ENCODE measurements at regions of chr19 and their contacts with region 1.

Region 1: GRCh38 chr19:12757544-12758274 is 6.1 kb downstream of the BEST2 start:
- DNase-seq: peak; percentile 77
- ATAC-seq: peak; percentile 83
- H3K4me3 Mint-ChIP-seq: peak overlapping the region; percentile 41
- H3K27ac Mint-ChIP-seq: no peak overlapping the region
- H3K4me1 Mint-ChIP-seq: peaks cover 10% of the 10 kb centered on the region
- H3K27me3 Mint-ChIP-seq: peaks cover 18% of the 10 kb centered on the region
- CTCF ChIP-seq: peak; percentile 98

Region 2: DNA sequence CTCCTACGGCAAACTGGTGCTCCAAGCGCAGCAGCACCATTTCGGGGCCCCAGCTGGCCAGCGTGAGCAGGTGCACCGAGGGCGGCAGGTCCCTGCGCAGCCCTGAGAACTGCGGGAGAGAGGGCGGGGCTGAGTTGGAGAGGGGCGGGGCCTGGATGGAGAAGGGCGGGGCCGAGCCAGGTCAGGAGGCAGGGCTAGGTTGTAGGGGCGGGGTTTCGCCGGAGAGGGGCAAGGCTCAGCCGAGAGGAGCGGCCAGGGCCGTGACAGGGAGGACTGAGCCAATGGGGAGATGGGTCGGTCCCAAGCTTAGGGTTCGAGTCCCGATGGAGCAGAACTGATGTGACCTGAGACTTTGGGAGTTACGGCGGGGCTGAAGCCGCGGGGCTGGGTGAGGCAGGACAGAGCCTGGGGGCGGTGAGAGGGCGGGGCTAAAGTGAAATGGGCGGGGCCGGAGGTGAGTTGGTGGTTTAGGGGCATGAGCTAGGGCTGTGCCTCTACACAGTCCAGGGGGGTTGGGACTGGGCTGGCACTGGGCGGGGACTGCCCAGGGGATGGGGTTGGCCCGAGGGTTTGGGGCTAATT is 110.1 kb before region 1 on chr19:
- CTCF ChIA-PET with region 1: no interaction called
- POLR2A ChIA-PET with region 1: no interaction called
- intact Hi-C with region 1: no loop called
- DNase-seq: peak; percentile 64
- ATAC-seq: peak; percentile 91
- H3K4me3 Mint-ChIP-seq: no peak overlapping the region
- H3K27ac Mint-ChIP-seq: no peak overlapping the region
- H3K4me1 Mint-ChIP-seq: peaks cover 5% of the 10 kb centered on the region
- H3K27me3 Mint-ChIP-seq: no peaks in the 10 kb centered on the region
- CTCF ChIP-seq: no peak

Region 3: DNA sequence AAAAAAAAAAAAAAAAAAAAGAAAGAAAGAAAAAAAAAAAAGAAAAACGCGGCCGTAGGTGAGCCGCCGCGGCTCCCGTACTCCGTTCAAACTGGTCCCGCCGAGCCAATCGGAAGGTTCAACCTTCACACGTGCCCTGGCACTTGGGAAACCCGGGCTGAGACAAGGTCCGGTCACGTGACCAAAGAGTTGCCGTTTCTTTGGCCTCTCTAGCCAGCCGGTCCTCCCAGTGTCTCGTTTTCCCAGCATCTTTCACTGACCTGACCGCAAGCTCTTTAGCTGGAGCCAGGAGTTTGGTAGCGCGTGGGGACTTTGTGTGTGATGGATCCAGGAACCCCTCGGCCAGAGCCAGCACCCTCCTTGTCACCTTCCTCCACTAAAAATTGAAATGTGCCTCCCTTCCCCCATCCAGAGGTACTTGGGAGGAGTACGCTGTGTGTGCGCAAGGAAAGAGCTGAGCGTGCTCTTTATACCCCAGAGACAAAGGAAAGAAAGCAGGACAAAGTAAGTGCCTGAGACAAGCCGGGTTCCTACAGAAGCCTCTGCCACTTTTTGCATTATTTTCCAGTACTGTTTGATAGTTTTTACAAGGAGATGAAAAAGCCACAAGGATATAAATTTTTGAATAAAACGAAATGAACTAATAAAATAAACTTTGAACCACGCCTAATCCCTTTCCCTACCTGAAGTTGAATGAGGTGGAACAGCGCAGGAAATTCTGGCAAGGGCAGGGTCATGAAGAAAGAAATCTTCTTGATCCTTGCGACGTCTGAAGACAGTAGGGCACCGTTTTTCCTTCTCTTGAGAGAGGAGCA is 34.9 kb before region 1 on chr19:
- CTCF ChIA-PET with region 1: interaction called, 24 read pairs
- POLR2A ChIA-PET with region 1: interaction called, 4 read pairs
- intact Hi-C with region 1: no loop called
- DNase-seq: peak; percentile 98
- ATAC-seq: peak; percentile 82
- H3K4me3 Mint-ChIP-seq: peak overlapping the region; percentile 96
- H3K27ac Mint-ChIP-seq: peak overlapping the region; percentile 91
- H3K4me1 Mint-ChIP-seq: peaks cover 29% of the 10 kb centered on the region
- H3K27me3 Mint-ChIP-seq: no peaks in the 10 kb centered on the region
- CTCF ChIP-seq: no peak

Region 4: DNA sequence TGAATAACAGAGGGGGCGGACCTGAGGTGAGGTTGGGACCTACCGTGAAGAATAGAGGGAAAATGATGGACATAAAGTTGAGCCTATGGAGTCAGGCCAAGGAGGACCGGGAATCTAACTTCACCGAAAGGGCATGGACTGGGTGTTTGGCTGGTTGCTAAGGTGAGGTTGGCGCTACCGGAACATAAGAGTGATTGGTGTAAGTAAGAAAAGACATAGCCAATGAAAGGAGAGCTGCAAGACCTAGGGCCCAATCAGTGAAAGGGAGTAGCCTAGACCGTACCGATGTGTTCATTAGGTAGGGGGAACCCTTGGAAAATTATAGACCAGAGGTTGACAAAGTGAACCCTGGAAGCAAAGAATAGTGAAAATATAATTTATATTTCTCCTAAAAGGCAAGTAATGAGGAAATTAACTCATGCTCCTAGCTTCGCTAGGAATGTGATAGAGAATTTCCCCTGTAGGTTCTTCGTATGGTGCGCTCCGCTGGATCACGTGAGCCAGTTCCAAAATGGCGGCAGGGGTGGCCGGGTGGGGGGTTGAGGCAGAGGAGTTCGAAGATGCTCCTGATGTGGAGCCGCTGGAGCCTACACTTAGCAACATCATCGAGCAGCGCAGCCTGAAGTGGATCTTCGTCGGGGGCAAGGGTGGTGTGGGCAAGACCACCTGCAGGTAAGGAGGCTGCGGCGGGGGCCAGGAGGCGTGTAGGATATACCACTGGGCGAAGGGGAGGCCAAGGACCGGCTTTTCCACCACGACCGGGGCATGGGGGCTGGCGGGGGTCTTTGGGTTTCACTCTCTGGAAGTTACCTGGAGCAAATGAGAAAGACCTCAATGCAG is 20.5 kb before region 1 on chr19 and contains the start of gene GET3:
- CTCF ChIA-PET with region 1: interaction called, 47 read pairs
- POLR2A ChIA-PET with region 1: interaction called, 10 read pairs
- intact Hi-C with region 1: no loop called
- DNase-seq: peak; percentile 89
- ATAC-seq: peak; percentile 84
- H3K4me3 Mint-ChIP-seq: peak within 1 kb of the TSS; percentile 99
- H3K27ac Mint-ChIP-seq: peak within 1 kb of the TSS; percentile 98
- H3K4me1 Mint-ChIP-seq: peaks cover 35% of the 10 kb centered on the region
- H3K27me3 Mint-ChIP-seq: no peaks in the 10 kb centered on the region
- CTCF ChIP-seq: no peak
- total RNA-seq, gene GET3: 50.7 to 52.2 TPM

Region 5: DNA sequence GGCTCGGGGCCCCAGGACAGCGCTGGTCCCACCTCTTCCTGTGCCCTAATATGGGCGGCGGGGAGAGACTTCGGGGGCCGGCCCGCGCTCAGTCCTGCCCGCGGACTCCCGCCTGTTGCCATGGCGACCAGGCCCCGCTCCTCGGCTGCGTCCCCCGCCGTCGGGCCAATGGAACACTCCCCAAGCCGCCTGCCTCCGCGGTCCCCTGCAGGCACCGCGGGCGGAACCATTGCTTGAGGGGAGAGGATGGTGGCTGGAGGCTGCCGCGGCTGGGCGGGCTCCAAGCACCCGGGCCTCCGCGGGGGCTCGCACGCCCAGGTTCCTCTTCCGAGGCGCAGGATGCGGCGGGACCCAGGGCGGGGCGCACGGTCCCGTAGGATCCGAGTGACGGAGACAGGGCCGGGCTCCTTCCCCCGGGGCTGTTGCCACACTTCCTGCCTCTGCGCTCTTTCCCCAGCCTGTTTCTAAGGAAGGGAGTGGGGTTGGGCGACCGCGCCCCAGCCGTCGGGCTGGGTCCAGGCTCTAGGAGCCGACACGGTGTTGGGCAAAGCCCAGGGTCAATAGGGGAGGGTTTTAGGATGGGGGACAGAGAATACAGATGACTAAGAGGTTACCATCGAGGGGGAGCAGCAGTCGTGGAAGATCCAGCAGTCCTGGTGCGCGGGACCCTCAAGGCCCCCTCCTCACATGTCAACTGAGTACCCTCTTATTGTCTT is 32.4 kb after region 1 on chr19:
- CTCF ChIA-PET with region 1: interaction called, 480 read pairs
- POLR2A ChIA-PET with region 1: interaction called, 7 read pairs
- intact Hi-C with region 1: no loop called
- DNase-seq: peak; percentile 98
- ATAC-seq: peak; percentile 52
- H3K4me3 Mint-ChIP-seq: peak overlapping the region; percentile 95
- H3K27ac Mint-ChIP-seq: peak overlapping the region; percentile 98
- H3K4me1 Mint-ChIP-seq: peaks cover 34% of the 10 kb centered on the region
- H3K27me3 Mint-ChIP-seq: no peaks in the 10 kb centered on the region
- CTCF ChIP-seq: no peak

Region 6: DNA sequence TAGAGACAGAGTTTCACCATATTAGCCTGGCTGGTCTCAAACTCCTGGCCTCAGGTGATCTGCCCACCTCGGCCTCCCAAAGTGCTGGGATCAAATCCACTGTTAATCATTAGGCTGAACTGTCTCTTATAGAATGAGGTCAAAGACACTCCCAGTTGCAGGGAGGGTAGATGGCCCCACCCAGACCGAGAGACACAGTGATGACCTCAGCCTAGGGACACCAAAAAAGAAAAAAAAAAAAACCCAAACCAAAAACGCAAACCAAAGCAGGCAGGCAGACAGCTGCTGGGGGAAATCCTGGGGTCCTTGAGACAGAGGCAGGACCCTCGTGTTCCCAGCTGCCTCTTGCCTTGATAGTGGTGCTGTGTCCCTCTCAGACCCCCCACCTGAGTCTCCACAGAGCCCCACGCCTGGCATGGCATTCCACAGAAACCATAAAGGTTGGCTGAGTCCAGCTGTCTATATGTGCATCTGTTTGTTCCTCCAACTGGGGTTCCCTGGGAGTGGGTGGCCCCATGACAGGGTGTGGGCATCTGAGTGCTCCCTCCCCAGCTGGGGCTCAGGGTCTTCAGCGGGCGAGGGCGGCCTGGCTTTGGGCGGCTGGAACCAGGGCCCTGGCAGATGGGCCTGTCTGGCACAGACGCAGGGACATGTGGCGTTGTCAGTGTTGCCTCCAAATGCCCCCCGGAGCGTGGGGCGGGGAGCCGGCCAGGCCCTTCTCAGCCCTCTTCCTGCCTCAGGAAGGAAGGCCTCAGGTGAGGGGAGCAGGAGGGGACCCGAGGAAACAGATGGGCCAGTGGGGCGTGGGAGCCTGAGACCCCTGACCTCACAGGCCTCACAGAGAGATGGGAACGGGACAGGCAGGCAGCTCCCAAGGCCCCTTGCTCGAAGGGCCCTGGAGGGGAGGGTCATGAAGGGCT is 216.9 kb after region 1 on chr19:
- CTCF ChIA-PET with region 1: no interaction called
- POLR2A ChIA-PET with region 1: no interaction called
- intact Hi-C with region 1: no loop called
- DNase-seq: no peak
- ATAC-seq: no peak
- H3K4me3 Mint-ChIP-seq: no peak overlapping the region
- H3K27ac Mint-ChIP-seq: no peak overlapping the region
- H3K4me1 Mint-ChIP-seq: peaks cover 4% of the 10 kb centered on the region
- H3K27me3 Mint-ChIP-seq: peaks cover 10% of the 10 kb centered on the region
- CTCF ChIP-seq: no peak